ENCODE measurements at regions of chr6 and their contacts with region 1.

Region 1: GRCh38 chr6:43667245-43668150 is 20.1 kb downstream of the MRPS18A start:
- DNase-seq: peak; percentile 92
- ATAC-seq: peak; percentile 57
- H3K4me3 Mint-ChIP-seq: peak overlapping the region; percentile 49
- H3K27ac Mint-ChIP-seq: peak overlapping the region; percentile 82
- H3K4me1 Mint-ChIP-seq: peaks cover 45% of the 10 kb centered on the region
- H3K27me3 Mint-ChIP-seq: peaks cover 1% of the 10 kb centered on the region
- CTCF ChIP-seq: peak; percentile 95

Region 2: DNA sequence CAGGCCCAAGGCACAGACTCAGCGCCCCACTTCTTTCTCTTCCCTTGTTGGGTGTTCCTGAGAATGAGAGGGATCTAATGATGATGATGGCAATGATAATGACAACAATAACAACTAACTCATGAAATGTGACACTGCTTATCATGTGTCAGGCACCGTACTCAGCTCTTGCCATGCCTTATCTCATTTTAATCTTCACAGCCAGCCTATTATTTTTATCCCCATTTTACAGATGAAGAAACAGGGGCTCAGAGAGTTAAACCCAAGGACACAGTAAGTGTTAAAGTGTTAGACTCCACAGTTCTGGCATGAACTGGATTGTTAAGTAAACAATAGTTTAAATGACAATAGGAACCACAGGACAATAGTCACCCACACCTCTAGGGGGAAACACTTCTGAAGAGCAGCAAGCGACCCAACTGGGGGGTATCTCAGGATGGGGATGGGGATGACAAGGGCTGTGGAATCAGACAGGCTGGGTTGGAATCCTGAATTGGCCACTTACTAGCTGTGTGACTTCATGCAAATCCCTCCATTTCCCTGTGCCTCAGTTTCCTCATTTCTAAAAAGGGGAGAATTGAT is 10.2 kb before region 1 on chr6:
- CTCF ChIA-PET with region 1: interaction called, 15 read pairs
- POLR2A ChIA-PET with region 1: interaction called, 3 read pairs
- intact Hi-C with region 1: no loop called
- DNase-seq: no peak
- ATAC-seq: no peak
- H3K4me3 Mint-ChIP-seq: no peak overlapping the region
- H3K27ac Mint-ChIP-seq: no peak overlapping the region
- H3K4me1 Mint-ChIP-seq: peaks cover 4% of the 10 kb centered on the region
- H3K27me3 Mint-ChIP-seq: no peaks in the 10 kb centered on the region
- CTCF ChIP-seq: no peak

Region 3: GRCh38 chr6:43687437-43688347 is 20.2 kb after region 1 on chr6 and contains the start of gene MRPS18A:
- CTCF ChIA-PET with region 1: interaction called, 68 read pairs
- POLR2A ChIA-PET with region 1: interaction called, 5 read pairs
- intact Hi-C with region 1: no loop called
- DNase-seq: peak; percentile 91
- ATAC-seq: peak; percentile 97
- H3K4me3 Mint-ChIP-seq: peak within 1 kb of the TSS; percentile 90
- H3K27ac Mint-ChIP-seq: peak within 1 kb of the TSS; percentile 93
- H3K4me1 Mint-ChIP-seq: peaks cover 41% of the 10 kb centered on the region
- H3K27me3 Mint-ChIP-seq: no peaks in the 10 kb centered on the region
- CTCF ChIP-seq: no peak
- total RNA-seq, gene MRPS18A: 45.4 to 52.9 TPM

Region 4: DNA sequence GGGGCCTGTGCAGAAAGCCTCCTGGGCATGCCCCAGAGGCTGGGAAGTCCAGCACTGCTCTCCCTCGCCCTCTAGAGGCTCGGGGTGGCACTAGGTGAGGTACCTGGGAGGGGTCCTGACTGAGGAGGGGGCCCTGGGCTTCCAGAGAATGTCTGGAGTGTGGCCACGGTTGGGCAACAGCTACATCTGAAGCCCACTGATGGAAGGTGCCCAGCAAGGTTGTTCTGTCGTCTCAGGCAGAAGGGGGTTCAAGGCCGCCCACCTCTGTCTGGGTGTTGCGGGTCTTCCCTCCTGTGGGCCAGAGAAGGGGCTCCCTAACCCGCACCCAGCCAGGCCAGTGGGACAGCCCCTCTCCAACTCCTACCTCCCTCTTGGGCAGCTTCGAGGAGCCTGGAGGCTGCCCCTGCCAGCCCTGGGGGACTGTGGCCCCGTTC is 91.1 kb after region 1 on chr6:
- CTCF ChIA-PET with region 1: interaction called, 6 read pairs
- POLR2A ChIA-PET with region 1: interaction called, 4 read pairs
- intact Hi-C with region 1: loop called (anchors 5 kb)
- DNase-seq: peak; percentile 49
- ATAC-seq: peak; percentile 79
- H3K4me3 Mint-ChIP-seq: no peak overlapping the region
- H3K27ac Mint-ChIP-seq: no peak overlapping the region
- H3K4me1 Mint-ChIP-seq: peaks cover 3% of the 10 kb centered on the region
- H3K27me3 Mint-ChIP-seq: no peaks in the 10 kb centered on the region
- CTCF ChIP-seq: peak; percentile 78

Region 5: DNA sequence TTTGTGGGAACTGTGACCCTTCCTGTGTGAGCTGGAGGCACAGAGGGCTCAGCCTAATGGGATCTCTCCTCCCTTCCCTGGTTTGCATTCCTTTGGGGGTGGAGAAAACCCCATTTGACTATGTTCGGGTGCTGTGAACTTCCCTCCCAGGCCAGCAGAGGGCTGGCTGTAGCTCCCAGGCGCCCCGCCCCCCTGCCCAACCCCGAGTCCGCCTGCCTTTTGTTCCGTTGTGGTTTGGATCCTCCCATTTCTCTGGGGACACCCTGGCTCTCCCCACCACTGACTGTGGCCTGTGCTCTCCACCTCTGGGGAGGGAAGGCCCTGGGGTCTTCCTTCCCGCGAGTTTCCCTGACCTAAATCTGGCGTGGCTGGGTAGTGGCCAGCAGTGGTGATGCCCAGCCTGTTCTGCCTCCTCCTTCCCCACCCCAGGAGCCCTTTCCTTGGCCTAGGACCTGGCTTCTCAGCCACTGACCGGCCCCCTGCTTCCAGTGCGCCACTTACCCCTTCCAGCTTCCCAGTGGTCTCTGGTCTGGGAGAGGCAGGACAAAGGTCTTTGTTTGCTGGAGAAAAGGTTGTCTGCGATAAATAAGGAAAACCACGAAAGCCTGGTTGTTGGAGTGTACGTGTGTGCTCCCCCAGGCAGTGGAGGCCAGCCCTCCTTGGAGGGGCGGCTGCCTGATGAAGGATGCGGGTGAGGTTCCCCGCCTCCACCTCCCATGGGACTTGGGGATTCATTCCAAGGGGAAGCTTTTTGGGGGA is 107.5 kb after region 1 on chr6:
- CTCF ChIA-PET with region 1: interaction called, 43 read pairs
- POLR2A ChIA-PET with region 1: interaction called, 13 read pairs
- intact Hi-C with region 1: no loop called
- DNase-seq: peak; percentile 79
- ATAC-seq: peak; percentile 18
- H3K4me3 Mint-ChIP-seq: peak overlapping the region; percentile 97
- H3K27ac Mint-ChIP-seq: no peak overlapping the region
- H3K4me1 Mint-ChIP-seq: peaks cover 42% of the 10 kb centered on the region
- H3K27me3 Mint-ChIP-seq: peaks cover 2% of the 10 kb centered on the region
- CTCF ChIP-seq: peak; percentile 81